ENCODE measurements at regions of chrX and their contacts with region 1.

Region 1: GRCh38 chrX:124395145-124395880 is 49.0 kb downstream of the SH2D1A start:
- DNase-seq: peak in 2 of 9 experiments; percentile 9 to 36
- ATAC-seq: peak; percentile 49
- H3K4me3 ChIP-seq: no peak overlapping the region
- H3K4me3 Mint-ChIP-seq: peak overlapping the region; percentile 47
- H3K27ac ChIP-seq: no peak overlapping the region
- H3K27ac Mint-ChIP-seq: peak overlapping the region; percentile 82
- H3K4me1 ChIP-seq: peaks cover 16% of the 10 kb centered on the region
- H3K4me1 Mint-ChIP-seq: peaks cover 30% of the 10 kb centered on the region
- H3K27me3 ChIP-seq: no peaks in the 10 kb centered on the region
- H3K27me3 Mint-ChIP-seq: no peaks in the 10 kb centered on the region
- CTCF ChIP-seq: no peak

Region 2: GRCh38 chrX:124440695-124441094 is 45.4 kb after region 1 on chrX:
- CTCF ChIA-PET with region 1: no interaction called
- POLR2A ChIA-PET with region 1: no interaction called
- intact Hi-C with region 1: loop called in 1 of 2 experiments (anchors 1 kb)
- DNase-seq: no peak
- ATAC-seq: no peak
- H3K4me3 ChIP-seq: no peak overlapping the region
- H3K4me3 Mint-ChIP-seq: no peak overlapping the region
- H3K27ac ChIP-seq: no peak overlapping the region
- H3K27ac Mint-ChIP-seq: no peak overlapping the region
- H3K4me1 ChIP-seq: no peaks in the 10 kb centered on the region
- H3K4me1 Mint-ChIP-seq: peaks cover 21% of the 10 kb centered on the region
- H3K27me3 ChIP-seq: no peaks in the 10 kb centered on the region
- H3K27me3 Mint-ChIP-seq: no peaks in the 10 kb centered on the region
- CTCF ChIP-seq: no peak

Region 3: DNA sequence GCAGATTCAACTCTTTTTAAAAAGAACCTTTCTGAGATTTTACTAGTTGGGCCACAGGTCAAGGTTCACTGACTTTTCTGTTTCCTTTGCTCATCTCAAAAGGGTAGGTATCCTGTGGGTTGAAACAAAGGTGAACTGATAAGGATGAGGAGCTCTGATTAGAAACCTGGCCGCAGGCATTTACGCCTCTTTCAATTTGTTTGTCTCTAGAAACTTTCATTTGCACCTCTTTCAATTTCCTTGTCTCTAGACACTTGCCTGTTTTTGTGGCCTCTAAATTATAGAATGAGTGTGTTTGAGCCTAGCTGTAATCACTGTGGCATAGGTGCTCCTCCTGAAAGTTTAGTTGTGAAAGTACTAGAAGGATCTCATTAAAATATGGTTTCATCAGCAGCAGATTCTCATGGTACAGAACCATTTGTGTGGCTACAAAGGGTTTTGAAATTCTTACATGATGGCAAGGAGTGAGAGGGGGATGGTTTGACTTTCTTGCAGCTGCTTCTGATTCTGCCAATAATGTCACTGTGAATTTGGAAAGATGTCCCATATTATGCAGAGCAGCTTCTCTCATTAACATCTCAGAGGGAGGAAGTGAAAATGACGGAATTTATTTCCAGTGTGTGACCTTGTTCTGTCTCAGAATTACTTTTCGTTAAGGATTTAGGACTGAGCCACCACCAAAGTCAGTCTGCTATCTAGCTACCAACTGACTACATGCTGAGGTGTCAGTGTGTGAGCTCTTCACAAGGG is 93.3 kb after region 1 on chrX:
- CTCF ChIA-PET with region 1: no interaction called
- POLR2A ChIA-PET with region 1: no interaction called
- intact Hi-C with region 1: no loop called
- DNase-seq: no peak
- ATAC-seq: no peak
- H3K4me3 ChIP-seq: no peak overlapping the region
- H3K4me3 Mint-ChIP-seq: no peak overlapping the region
- H3K27ac ChIP-seq: no peak overlapping the region
- H3K27ac Mint-ChIP-seq: no peak overlapping the region
- H3K4me1 ChIP-seq: no peaks in the 10 kb centered on the region
- H3K4me1 Mint-ChIP-seq: no peaks in the 10 kb centered on the region
- H3K27me3 ChIP-seq: no peaks in the 10 kb centered on the region
- H3K27me3 Mint-ChIP-seq: no peaks in the 10 kb centered on the region
- CTCF ChIP-seq: no peak